ENCODE measurements at regions of chr10 and their contacts with region 1.

Region 1: DNA sequence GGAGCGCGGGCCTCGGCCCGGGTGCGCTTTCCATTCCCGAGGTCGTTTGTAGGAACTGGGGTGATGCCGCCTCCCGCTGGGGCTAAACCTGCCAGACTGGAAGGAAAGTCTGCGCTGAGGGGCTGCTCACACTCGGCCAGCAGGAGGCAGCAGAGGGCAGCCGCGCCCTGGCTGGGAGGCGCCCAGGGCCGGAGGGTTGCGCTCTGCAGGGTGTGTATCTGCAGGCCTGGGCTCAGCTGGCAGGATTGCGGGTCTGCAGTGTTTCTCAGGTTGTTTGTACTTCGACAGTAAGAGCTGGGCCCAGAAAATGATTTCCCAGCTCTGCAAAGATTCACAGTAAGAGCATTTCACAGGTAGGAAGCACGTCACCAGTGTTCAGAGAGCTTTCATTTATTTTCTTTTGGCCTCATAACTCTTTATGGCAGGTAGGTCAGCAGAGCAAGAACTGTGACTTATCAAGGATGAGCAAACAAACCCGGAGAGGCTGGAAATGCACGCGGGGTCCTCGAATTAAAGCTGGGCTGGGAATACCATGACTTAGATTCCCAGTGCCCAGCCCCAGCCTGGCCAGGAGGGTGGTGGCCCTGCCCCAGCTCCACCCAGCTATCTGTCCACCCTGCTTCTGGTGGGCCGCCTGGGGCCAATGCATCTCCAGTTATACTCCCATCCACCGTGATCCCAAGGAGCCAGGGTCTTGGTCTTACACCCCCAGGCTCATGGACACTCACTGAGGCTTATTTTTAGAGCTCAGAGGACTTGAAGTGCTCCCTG is 15.2 kb upstream of the PPP2R2D start:
- DNase-seq: peak; percentile 85 to 89 (median 88)
- ATAC-seq: peak; percentile 97
- H3K4me3 ChIP-seq: no peak overlapping the region
- H3K27ac ChIP-seq: no peak overlapping the region
- H3K4me1 ChIP-seq: peaks cover 10% of the 10 kb centered on the region
- H3K27me3 ChIP-seq: peaks cover 0 to 3% of the 10 kb centered on the region in 2 donors
- CTCF ChIP-seq: peak; percentile 93 to 99 (median 97)
- POLR2A ChIP-seq: no peak

Region 2: DNA sequence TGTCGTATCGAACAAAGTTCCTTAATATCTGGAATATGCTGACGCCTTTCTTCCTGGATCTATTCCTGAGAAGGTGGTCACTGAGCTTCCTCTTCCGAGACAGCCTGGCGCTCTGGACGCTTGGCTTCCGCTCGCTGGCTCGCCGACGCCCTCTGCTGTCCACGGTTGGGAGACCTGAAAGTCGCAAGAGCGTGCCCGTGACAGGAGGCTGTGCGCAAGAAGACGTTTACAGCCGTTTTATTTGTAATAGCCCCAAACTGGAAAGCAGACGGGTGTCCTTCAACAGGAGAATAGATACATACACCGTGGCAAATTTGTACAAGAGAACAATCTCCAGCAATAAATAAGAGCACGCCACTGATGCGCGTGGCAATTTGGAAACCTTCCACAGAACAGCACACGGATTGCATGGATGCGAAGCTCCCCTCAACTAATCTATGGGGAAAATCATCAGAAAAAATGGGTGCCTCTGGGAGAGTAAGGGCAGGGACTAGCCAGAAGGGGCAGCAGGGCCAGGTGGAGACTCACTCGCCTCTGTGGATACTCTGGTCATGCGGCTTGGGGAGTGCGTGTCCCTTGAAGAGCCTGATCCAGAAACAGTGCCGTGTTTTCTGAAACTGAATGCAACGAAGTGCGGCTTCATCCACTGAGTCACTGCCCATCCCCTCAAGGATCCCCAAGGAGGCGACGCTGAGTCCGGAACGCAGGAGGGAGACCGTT is 137.7 kb after region 1 on chr10:
- intact Hi-C with region 1: loop called (anchors 5 kb)
- DNase-seq: peak; percentile 86 to 91 (median 88)
- ATAC-seq: peak; percentile 96
- H3K4me3 ChIP-seq: no peak overlapping the region
- H3K27ac ChIP-seq: no peak overlapping the region
- H3K4me1 ChIP-seq: peaks cover 14% of the 10 kb centered on the region
- H3K27me3 ChIP-seq: no peaks in the 10 kb centered on the region
- CTCF ChIP-seq: peak; percentile 85 to 95 (median 94)
- POLR2A ChIP-seq: no peak

Region 3: DNA sequence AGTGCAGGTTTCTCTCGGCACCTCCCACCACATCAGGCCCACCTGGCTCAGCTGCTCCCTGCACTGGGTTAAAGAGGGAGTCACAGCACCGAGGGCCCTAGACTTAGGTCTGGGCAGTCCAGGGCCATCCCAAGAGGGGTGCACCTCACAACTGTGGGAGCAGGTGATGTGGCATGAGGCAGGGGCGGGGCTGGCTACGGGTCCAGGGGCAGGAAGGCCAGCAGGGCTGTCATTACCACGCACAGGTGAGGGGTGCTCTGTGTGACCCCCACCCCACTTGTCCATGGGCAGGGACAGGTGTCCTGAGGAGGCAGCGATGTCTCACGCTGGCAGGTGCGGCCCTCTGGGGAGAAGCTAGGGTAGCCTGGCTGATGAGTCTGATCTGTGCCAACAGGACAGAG is 260.7 kb after region 1 on chr10:
- intact Hi-C with region 1: loop called (anchors 5 kb)
- DNase-seq: no peak
- ATAC-seq: no peak
- H3K4me3 ChIP-seq: no peak overlapping the region
- H3K27ac ChIP-seq: no peak overlapping the region
- H3K4me1 ChIP-seq: no peaks in the 10 kb centered on the region
- H3K27me3 ChIP-seq: no peaks in the 10 kb centered on the region
- CTCF ChIP-seq: no peak
- POLR2A ChIP-seq: no peak

Measured in body of pancreas (tissue), 4 donors.